HEK293 (cell line): ENCODE measurements at regions of chr10 and their contacts with region 1.

Region 1: DNA sequence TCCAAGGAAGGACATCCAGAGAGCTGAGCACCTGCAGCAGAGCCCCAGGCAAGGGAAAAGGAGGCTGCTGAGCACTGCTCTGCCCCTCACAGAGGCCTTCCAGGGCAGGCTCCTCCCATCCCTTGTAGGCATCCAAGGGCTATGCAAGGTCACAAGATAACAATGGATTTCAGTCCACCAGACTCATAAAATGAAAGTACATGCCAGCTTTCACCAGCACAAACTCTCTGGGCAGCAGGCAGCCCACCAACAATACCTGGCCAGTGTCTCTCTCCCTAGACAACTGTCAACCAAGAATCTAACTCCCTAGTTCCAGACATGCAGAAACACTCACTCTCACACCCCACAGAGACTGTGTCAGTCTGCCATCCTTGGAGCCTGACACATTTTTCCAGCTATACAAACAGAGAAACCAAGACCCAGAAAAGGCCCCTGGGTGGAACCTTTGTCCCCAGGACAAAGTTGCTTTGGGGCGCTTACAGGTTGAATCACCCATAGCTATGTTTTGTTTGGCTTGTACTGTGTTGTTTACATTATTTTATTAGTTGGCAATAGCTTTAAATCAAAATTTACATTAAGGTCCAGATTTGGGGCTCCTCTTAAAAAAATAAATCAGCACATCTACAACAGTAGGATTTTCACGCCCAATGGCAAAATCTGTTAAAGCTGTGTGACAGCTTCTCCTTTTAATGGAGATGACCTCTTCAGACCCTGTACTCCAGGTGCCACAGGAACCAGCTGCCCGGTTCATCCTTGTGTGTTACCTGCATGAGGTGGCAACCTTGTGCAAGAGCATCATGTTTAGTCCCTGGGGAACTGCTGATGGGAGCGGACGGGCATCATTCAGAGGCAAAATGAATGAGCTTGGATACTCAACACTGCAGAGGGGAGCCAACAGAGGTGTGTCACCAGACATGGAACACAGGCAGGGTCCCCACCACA is 5.2 kb downstream of the GRID1 start:
- H3K4me3 ChIP-seq: no peak overlapping the region
- H3K27ac ChIP-seq: no peak overlapping the region
- H3K4me1 ChIP-seq: peaks cover 8% of the 10 kb centered on the region
- CTCF ChIP-seq: no peak

Region 2: DNA sequence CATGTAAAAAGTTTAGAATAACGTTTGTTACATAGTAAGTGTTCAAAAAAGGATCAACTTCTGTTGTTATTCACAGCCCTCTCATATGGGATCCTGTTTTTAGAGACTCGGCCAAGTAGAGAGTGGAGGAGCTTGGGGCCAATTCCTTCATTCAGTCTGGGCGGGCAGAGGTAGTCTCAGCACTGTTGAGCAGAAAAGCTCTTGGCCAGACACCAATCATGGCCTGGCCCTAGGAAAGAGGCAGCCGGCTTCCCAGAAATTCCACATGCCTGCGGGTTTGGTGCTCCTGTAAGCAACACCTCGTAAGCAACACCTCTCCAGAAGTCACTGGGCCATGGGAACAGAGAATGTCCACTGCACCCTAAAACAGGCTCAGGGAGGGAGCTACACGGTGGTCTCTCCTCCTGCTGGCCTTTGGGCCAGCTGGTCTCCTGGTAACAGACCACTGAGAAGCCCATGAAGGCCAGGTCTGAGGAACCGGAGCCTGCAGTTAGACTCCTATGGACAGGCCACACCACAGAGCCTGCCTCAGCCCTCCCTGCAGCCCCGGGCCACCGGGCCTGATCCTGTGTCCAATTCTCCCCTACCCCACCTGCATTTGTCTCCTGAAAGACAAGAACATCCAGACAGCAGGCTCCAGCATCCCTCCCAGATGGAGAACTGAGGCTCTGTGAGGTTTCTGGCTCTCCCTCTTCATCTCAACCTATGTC is 143.9 kb before region 1 on chr10:
- CTCF ChIA-PET with region 1: no interaction called
- POLR2A ChIA-PET with region 1: no interaction called
- H3K4me3 ChIP-seq: no peak overlapping the region
- H3K27ac ChIP-seq: no peak overlapping the region
- H3K4me1 ChIP-seq: no peaks in the 10 kb centered on the region
- CTCF ChIP-seq: no peak

Region 3: DNA sequence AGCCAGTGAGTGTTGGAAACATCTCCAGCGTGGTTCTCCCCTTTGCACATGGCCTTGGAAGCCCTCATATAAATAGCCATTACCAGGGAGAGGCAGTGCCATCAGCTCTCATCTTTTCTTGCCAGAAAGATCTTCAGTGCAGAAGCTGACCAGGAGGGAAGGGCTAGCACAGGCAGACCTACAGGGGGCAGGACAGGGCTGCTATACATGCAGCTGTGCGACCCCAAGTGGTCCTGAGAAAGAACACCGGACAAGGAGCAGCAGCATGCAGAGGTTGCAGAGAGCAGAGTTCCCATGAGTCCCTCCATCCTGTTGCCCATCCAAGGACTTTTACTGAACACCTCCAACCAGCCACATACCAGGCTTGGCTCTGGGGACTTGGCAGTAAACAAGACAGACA is 12.0 kb before region 1 on chr10:
- CTCF ChIA-PET with region 1: interaction called, 34 read pairs
- POLR2A ChIA-PET with region 1: no interaction called
- H3K4me3 ChIP-seq: no peak overlapping the region
- H3K27ac ChIP-seq: no peak overlapping the region
- H3K4me1 ChIP-seq: no peaks in the 10 kb centered on the region
- CTCF ChIP-seq: peak; percentile 92

Region 4: GRCh38 chr10:86376852-86377796 is 15.7 kb after region 1 on chr10:
- CTCF ChIA-PET with region 1: interaction called, 10 read pairs
- POLR2A ChIA-PET with region 1: no interaction called
- H3K4me3 ChIP-seq: no peak overlapping the region
- H3K27ac ChIP-seq: no peak overlapping the region; the same call in 1 of the 2 replicates
- H3K4me1 ChIP-seq: no peaks in the 10 kb centered on the region
- CTCF ChIP-seq: peak; percentile 89